ENCODE measurements at regions of chr14 and their contacts with region 1.

Region 1: GRCh38 chr14:74852927-74853514 is 22.9 kb downstream of the PROX2 start:
- DNase-seq: no peak
- ATAC-seq: peak; percentile 49
- H3K4me3 Mint-ChIP-seq: no peak overlapping the region
- H3K27ac Mint-ChIP-seq: no peak overlapping the region
- H3K4me1 Mint-ChIP-seq: peaks cover 18% of the 10 kb centered on the region
- H3K27me3 Mint-ChIP-seq: no peaks in the 10 kb centered on the region

Region 2: GRCh38 chr14:74816124-74816523 is 36.9 kb before region 1 on chr14:
- CTCF ChIA-PET with region 1: no interaction called
- POLR2A ChIA-PET with region 1: no interaction called
- DNase-seq: no peak
- ATAC-seq: no peak
- H3K4me3 Mint-ChIP-seq: no peak overlapping the region
- H3K27ac Mint-ChIP-seq: no peak overlapping the region
- H3K4me1 Mint-ChIP-seq: peaks cover 5% of the 10 kb centered on the region
- H3K27me3 Mint-ChIP-seq: no peaks in the 10 kb centered on the region

Region 3: GRCh38 chr14:74841230-74842207 is 11.5 kb before region 1 on chr14:
- CTCF ChIA-PET with region 1: interaction called, 87 read pairs
- POLR2A ChIA-PET with region 1: no interaction called
- DNase-seq: peak; percentile 64
- ATAC-seq: peak; percentile 84
- H3K4me3 Mint-ChIP-seq: peak overlapping the region; percentile 32
- H3K27ac Mint-ChIP-seq: peak overlapping the region; percentile 85
- H3K4me1 Mint-ChIP-seq: peaks cover 60% of the 10 kb centered on the region
- H3K27me3 Mint-ChIP-seq: no peaks in the 10 kb centered on the region

Region 4: GRCh38 chr14:74867673-74868072 is 14.7 kb after region 1 on chr14:
- CTCF ChIA-PET with region 1: interaction called, 155 read pairs
- POLR2A ChIA-PET with region 1: interaction called, 6 read pairs
- DNase-seq: peak; percentile 86
- ATAC-seq: peak; percentile 97
- H3K4me3 Mint-ChIP-seq: peak overlapping the region; percentile 46
- H3K27ac Mint-ChIP-seq: peak overlapping the region; percentile 86
- H3K4me1 Mint-ChIP-seq: peaks cover 33% of the 10 kb centered on the region
- H3K27me3 Mint-ChIP-seq: no peaks in the 10 kb centered on the region

Region 5: DNA sequence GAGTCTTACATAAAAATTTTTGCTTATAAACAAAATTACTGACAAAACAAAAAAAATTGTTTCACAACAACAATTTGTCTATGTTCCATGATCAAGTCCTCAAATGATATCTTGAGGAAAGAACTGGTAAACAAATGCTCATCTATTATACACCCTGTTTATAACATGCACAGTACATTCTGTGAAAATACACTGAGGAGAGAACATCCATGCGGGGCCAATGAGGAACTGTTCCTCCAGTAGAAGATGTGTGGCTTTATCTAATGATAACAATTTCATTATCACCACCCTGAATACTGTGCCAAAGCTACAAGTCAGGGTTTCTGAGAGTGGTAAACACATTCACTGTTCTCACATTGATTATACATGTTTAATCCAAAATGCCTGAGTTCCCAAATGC is 187.5 kb after region 1 on chr14:
- CTCF ChIA-PET with region 1: no interaction called
- POLR2A ChIA-PET with region 1: no interaction called
- DNase-seq: no peak
- ATAC-seq: no peak
- H3K4me3 Mint-ChIP-seq: no peak overlapping the region
- H3K27ac Mint-ChIP-seq: no peak overlapping the region
- H3K4me1 Mint-ChIP-seq: peaks cover 5% of the 10 kb centered on the region
- H3K27me3 Mint-ChIP-seq: no peaks in the 10 kb centered on the region

Measured in activated CD8-positive, alpha-beta T cell treated with anti-CD3 and anti-CD28 coated beads, Interleukin-2, amount 10 ng/mL, durations not matched to agents 7 days and 5 days (primary cell).